Left cardiac atrium (tissue), 4 donors: ENCODE measurements at regions of chr1 and their contacts with region 1.

Region 1: DNA sequence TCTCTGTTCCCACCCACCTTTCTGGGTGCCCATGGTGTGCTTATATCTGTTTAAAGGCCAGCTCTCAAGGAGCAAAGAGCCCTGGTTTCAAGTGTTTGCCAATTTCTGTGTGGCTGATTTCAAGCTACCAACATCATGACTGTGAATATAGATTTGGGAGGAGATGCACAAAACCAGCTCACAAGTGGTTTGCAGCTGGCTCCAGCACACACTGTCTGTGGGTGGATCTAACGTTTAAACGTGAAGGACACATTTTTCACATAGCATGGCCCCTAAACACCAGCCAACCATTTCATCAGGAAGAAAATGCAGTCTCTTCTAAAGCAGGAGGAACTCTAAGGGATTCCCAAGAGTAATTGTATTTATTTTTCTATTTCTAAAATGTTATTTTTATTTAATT is 65.2 kb downstream of the FCRL5 start:
- DNase-seq: no peak
- ATAC-seq: no peak

Region 2: GRCh38 chr1:157193702-157194391 is 293.2 kb before region 1 on chr1:
- intact Hi-C with region 1: loop called (anchors 2 to 5 kb)
- DNase-seq: peak; percentile 59
- ATAC-seq: no peak

Region 3: DNA sequence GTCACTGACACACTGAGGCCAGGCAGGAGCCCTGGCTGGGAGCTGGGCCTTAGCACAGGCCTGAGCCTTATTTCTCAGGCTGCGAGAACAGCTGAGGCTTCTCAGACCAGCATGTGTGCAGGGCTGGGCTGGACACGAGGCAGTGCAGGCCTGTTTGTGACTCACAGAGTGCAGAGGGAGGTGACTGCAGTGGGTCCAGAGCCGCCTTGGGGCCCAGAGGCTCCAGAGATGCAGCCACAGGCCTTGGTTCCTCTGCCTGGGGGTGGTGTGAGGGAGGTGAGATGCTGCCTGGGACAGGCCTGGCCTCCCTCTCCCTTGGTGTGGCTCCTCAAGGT is 287.7 kb before region 1 on chr1:
- intact Hi-C with region 1: loop called in 1 of 2 experiments (anchors 5 kb)
- DNase-seq: no peak
- ATAC-seq: no peak

Region 4: DNA sequence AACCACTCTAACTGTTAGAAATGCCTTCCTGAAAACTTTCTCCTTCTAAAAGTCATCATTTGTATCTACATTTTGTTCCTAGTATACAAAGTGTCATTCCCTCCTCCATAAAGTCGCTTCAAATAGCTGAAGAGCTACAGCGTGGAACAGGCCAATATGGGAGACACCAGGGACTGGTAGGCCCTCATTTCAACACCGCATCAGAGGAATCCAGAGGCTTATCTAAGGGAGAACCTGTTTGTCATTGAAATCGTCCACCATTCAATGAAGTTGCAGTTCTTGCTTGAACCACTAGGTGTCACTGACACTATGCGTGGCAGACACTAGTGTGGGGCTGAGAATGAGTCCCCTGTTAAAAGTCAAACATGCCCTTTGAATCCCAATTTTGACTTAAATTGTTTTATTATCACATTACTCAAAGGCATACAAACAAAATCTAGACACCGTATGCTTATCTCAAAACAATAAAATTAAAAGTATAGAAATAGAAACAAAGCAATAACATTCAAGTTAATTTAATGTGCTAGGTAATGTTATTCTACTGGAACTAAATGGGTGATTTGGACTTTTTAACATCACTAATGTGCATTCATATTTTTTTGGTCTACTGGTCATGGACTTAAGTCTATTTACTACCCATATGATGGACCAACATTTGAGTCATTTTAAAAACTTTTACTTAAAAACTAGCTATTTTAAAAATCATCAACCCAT is 117.1 kb before region 1 on chr1:
- intact Hi-C with region 1: loop called (anchors 5 to 10 kb)
- DNase-seq: no peak
- ATAC-seq: peak; percentile 68 to 78

Region 5: DNA sequence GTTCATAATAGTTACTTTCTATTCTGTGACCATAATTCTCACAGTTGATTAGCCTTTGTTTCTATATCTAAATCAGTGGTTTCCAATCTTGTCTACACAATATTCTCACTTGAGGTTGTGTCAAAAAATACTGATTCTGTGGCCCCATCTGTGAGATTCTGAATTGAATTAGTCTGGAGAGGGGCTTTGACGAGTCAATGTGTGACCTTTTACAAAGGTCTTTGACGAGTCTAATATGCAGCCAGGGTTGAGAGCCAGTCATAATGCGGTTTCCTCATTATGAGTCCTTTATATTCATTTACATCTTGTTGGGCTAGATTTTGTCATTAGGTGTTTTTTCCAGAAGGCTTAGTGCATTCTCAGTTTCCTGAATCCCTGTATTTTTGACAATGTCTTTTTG is 45.5 kb after region 1 on chr1:
- intact Hi-C with region 1: no loop called
- DNase-seq: no peak
- ATAC-seq: no peak